Activated T-helper 1 cell treated with anti-CD3 and anti-CD28 coated beads, Interleukin-12 subunit alpha, Interleukin-12 subunit beta, Interleukin-2, Interleukin-4 antibody, amounts not matched to agents 30 ng/mL and 10 ng/mL and 1 ng/mL, durations not matched to agents 14 hours and 24 hours and 36 hours (primary cell): ENCODE measurements at regions of chr6 and their contacts with region 1.

Region 1: GRCh38 chr6:87472525-87473418 is at the start of gene SLC35A1:
- DNase-seq: peak; percentile 77
- H3K4me3 Mint-ChIP-seq: peak within 1 kb of the TSS; percentile 98
- H3K27ac Mint-ChIP-seq: peak within 1 kb of the TSS; percentile 97
- H3K4me1 Mint-ChIP-seq: peaks cover 14% of the 10 kb centered on the region
- H3K27me3 Mint-ChIP-seq: peaks cover 7% of the 10 kb centered on the region
- total RNA-seq, gene SLC35A1: 9.7 and 10.2 TPM in 2 replicates

Region 2: DNA sequence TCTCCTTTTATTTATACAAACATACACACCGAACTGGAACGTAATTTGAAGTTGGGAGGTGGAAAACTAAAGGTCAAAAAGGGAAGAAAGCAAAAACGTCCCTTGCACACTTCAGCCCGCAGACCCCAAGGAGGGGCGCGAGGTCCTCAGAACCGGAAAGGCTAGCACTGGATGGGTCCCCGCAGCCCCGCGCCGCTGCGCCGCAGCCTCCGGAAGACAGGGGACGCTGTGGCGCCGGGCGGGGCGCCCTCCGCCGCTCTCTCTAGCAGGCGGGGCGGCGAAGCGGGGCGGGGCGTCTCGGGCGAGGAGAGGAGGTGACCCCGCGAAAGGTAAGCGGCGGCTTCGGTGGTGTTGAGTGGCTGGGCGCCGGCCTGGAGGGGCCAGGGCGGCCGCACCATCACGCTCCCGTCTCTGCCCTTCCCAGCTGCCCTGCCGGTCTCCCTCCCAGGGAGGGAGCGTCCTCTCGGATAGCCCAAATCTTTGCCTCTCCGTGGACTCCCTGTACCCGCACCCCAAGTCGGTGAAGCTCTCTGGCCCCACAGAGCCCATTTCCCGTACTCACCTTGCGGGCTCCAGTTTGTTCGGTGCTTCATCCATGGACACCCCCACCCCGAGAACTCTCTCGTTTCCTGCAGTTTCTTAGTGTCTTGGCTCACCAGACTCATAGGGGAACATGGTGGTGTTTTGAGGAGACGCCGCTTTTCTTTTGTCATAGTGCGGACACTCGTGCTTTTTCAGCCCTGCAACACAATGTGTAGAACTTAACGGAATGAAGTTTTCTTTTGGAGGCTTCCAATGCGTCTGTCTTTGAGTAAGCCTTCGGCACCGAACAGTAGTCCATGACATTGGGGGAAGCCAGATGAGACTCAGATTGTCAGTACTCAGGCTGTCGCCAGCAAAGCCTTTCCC is 150.2 kb before region 1 on chr6 and contains the start of gene SMIM8:
- intact Hi-C with region 1: loop called (anchors 1 kb)
- DNase-seq: peak; percentile 84
- H3K4me3 Mint-ChIP-seq: peak within 1 kb of the TSS; percentile 99
- H3K27ac Mint-ChIP-seq: peak within 1 kb of the TSS; percentile 92
- H3K4me1 Mint-ChIP-seq: peaks cover 8% of the 10 kb centered on the region
- H3K27me3 Mint-ChIP-seq: peaks cover 3% of the 10 kb centered on the region
- total RNA-seq, gene SMIM8: 7.3 and 9.2 TPM in 2 replicates

Region 3: GRCh38 chr6:87407901-87408720 is 64.7 kb before region 1 on chr6 and contains the start of gene CFAP206:
- intact Hi-C with region 1: loop called (anchors 1 kb)
- DNase-seq: peak; percentile 66
- H3K4me3 Mint-ChIP-seq: peak within 1 kb of the TSS; percentile 84
- H3K27ac Mint-ChIP-seq: peak within 1 kb of the TSS; percentile 76
- H3K4me1 Mint-ChIP-seq: peaks cover 16% of the 10 kb centered on the region
- H3K27me3 Mint-ChIP-seq: peaks cover 28% of the 10 kb centered on the region
- total RNA-seq, gene CFAP206: 0.20 TPM in 1 of 2 replicates, not detected in the other

Region 4: DNA sequence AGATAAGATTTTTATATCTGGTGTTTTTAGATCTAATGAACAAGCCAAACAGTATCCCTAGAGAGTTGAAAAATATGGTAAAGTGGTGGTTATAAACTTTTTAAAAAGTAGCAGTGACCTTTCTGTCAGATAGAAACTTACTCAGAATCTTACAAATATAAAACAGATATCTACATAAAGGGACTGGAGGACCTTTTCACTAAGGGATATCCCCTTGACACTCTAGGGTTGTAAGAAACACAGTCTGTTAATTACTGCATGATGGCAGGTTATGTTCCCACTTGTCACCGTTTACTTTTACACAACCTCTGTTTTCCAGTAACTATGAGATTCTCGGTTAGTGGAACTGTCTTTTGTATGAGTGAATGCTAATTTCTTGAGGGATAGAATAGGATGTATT is 53.5 kb before region 1 on chr6:
- intact Hi-C with region 1: no loop called
- DNase-seq: no peak
- H3K4me3 Mint-ChIP-seq: no peak overlapping the region
- H3K27ac Mint-ChIP-seq: no peak overlapping the region
- H3K4me1 Mint-ChIP-seq: no peaks in the 10 kb centered on the region
- H3K27me3 Mint-ChIP-seq: peaks cover 18% of the 10 kb centered on the region

Region 5: DNA sequence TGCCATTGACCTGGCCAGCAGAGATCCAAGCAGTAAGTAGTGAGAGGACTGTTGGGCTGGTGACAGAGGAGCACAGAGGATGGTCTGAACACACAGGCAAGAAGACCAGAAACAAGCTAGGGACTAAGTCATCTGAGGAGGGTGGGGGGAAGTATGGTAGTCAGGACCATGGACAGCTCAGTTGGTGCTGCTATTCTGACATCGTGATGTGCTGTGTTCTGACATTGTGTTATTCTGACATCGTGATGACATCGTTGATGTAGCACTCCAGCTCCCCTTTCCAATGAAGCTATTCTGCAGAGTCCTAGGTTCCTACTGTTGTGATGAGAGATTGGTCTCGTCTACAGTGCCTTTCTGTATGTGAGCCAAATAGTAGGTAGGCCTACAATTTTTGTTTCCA is 36.3 kb before region 1 on chr6:
- intact Hi-C with region 1: loop called (anchors 2 kb)
- DNase-seq: peak; percentile 51
- H3K4me3 Mint-ChIP-seq: no peak overlapping the region
- H3K27ac Mint-ChIP-seq: no peak overlapping the region
- H3K4me1 Mint-ChIP-seq: no peaks in the 10 kb centered on the region
- H3K27me3 Mint-ChIP-seq: no peaks in the 10 kb centered on the region